RWPE1 (cell line): ENCODE measurements at regions of chr2 and their contacts with region 1.

Region 1: DNA sequence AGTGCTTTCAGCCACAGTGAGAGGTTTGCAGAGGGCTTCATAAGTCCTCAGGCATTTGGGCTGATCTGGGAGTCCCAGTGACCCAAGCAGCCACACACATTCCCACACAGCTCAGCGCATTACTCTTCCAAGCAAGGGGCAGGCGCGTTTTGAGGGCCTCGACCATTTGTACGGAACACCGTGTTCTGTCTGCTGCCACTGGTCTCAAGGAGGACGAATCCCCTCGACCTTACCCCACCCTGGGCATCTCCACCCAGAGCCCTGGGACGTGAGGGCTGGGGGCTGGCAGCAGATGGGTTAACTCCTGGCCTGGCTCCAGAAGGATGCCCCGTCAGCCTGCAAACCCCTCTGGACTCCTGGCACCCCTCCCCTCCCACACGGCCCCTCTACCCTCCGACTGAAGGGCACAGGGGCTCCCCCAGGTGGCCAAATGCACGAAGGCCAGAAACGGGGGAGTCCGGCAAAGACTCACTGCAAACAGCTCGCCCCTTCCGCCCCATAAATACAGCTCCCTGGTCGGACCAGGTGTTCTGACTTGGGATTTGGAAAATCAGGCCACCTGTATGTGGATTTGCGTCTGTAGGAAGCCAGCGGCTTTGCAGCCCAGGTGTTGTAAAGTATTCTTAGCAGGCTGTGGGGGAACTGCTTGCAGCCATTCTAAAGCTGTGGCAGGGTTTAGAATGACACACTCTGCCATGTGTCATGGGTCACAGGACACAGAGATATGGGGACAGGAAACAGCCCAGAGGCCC is 33.6 kb upstream of the PTMA start:
- DNase-seq: peak; percentile 46
- H3K27ac ChIP-seq: peak overlapping the region; percentile 68
- CTCF ChIP-seq: peak; percentile 88

Region 2: GRCh38 chr2:231612179-231613053 is 62.3 kb before region 1 on chr2:
- CTCF ChIA-PET with region 1: interaction called, 17 read pairs
- POLR2A ChIA-PET with region 1: interaction called, 3 read pairs
- DNase-seq: peak; percentile 96
- H3K27ac ChIP-seq: peak overlapping the region; percentile 97
- CTCF ChIP-seq: peak; percentile 93

Region 3: GRCh38 chr2:231648587-231649174 is 26.1 kb before region 1 on chr2:
- CTCF ChIA-PET with region 1: interaction called, 12 read pairs
- POLR2A ChIA-PET with region 1: no interaction called
- DNase-seq: peak; percentile 55
- H3K27ac ChIP-seq: peak overlapping the region; percentile 25
- CTCF ChIP-seq: peak; percentile 74

Region 4: GRCh38 chr2:232058063-232058877 is 383.5 kb after region 1 on chr2:
- CTCF ChIA-PET with region 1: no interaction called
- POLR2A ChIA-PET with region 1: no interaction called
- DNase-seq: no peak
- H3K27ac ChIP-seq: no peak overlapping the region
- CTCF ChIP-seq: no peak